ENCODE measurements at regions of chr5 and their contacts with region 1.

Region 1: DNA sequence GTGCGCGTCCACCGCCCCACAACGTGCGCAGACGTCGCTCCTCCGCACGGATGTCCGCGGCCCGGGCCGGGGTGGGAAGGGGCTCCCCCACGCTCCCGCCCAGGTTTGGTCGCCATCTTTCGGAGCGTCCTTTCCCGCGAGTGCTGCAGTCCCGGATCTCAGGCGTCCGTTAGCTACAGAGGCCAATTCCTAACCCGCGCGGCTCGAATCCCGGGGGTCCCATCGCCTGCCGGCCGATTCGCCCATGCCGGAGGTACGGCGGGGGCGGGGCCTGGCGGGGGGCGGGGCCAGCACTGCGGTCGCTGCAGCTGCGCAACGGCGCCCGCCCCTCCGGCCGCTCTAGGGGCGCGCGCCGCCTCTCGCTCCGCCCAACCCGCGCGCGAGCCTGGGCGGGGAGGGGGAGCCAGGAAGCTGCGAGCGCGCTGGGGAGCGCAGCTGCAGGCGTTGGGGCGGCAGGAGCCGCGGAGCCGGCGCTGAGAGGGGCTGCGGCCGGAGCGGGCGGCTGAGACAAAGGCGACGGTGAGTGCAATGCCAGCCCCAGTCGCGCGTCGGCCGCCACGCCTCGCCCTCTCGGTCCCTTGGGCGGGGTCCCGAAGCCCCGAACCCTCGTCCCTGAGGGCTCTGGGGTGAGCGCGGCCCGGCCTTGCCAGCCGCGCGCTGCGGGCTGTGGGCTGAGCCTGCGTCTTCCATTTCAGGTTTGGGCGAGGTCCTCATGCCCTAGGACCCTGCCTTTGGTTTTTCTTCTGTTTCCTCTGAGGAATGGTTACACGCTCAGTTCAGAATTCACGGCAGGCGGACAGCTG is at the start of gene CDC42SE2:
- DNase-seq: peak; percentile 44
- H3K4me3 ChIP-seq: peak within 1 kb of the TSS; percentile 98
- CTCF ChIP-seq: no peak

Region 2: GRCh38 chr5:131182839-131183238 is 81.0 kb before region 1 on chr5:
- in situ Hi-C with region 1: no loop called
- DNase-seq: no peak
- H3K4me3 ChIP-seq: no peak overlapping the region
- CTCF ChIP-seq: no peak

Region 3: DNA sequence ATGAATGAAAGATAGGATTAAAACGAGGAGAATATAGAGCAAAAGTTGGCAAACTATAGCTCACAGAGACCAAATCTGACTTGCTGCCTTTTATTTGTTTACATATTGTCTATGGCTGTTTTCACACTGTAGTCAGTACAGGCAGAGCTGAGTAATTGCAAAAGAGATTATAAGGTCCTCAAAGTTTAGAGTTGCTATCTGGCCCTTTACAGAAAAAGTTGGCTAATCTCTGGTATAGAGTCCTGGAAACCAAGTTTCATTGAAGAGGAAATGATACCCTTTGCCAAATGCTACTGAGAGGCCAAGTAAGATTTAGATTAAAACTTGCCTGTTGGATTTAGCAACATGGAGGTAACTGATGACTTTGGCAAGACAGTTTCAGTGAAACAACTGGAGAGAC is 57.1 kb before region 1 on chr5:
- in situ Hi-C with region 1: no loop called
- DNase-seq: no peak
- H3K4me3 ChIP-seq: no peak overlapping the region
- CTCF ChIP-seq: no peak

Region 4: DNA sequence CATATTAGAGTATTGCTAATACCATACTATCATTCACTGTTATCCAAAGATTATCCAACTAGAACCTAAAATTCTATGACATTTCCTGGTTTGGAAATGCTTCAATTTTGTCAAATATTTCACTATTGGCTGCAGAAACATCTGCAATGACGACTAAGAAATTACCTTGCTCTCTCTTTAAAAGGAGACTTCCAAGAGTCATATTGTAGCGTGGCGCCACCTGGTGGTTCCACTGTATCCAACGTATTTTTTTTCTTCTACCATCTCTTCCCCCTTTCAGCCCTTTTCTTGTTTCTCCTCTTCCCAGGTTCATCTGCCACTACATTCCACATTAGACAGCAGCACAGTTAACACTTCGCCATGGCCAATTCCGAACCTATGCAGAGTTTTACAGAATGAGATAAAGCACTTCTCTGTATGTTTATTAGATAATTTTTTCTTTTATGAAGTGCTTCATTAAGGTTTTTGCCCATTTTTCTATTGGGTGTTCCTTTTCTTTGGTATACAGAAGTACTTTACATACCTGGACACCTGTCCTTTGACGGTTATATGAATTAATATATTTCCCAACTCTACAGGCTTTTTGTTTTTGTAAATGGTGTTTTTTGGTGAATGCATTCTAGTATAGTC is 153.5 kb after region 1 on chr5:
- in situ Hi-C with region 1: loop called (anchors 25 kb)
- DNase-seq: peak; percentile 72
- H3K4me3 ChIP-seq: no peak overlapping the region
- CTCF ChIP-seq: peak; percentile 72